GM13976 (cell line): ENCODE measurements at regions of chr11 and their contacts with region 1.

Region 1: GRCh38 chr11:7986768-7987559 is at the start of gene EIF3F:
- DNase-seq: peak; percentile 92
- CTCF ChIP-seq: peak; percentile 79

Region 2: GRCh38 chr11:7513234-7514098 is 473.5 kb before region 1 on chr11 and contains the start of gene PPFIBP2:
- in situ Hi-C with region 1: loop called (anchors 25 kb)
- DNase-seq: peak; percentile 94
- CTCF ChIP-seq: peak; percentile 48

Region 3: GRCh38 chr11:7892840-7893254 is 94.1 kb before region 1 on chr11:
- in situ Hi-C with region 1: loop called (anchors 10 kb)
- DNase-seq: peak; percentile 54
- CTCF ChIP-seq: peak; percentile 54

Region 4: GRCh38 chr11:8318336-8318935 is 331.5 kb after region 1 on chr11:
- in situ Hi-C with region 1: no loop called
- DNase-seq: no peak
- CTCF ChIP-seq: peak; percentile 29